CD14-positive monocyte (primary cell): ENCODE measurements at regions of chr12 and their contacts with region 1.

Region 1: DNA sequence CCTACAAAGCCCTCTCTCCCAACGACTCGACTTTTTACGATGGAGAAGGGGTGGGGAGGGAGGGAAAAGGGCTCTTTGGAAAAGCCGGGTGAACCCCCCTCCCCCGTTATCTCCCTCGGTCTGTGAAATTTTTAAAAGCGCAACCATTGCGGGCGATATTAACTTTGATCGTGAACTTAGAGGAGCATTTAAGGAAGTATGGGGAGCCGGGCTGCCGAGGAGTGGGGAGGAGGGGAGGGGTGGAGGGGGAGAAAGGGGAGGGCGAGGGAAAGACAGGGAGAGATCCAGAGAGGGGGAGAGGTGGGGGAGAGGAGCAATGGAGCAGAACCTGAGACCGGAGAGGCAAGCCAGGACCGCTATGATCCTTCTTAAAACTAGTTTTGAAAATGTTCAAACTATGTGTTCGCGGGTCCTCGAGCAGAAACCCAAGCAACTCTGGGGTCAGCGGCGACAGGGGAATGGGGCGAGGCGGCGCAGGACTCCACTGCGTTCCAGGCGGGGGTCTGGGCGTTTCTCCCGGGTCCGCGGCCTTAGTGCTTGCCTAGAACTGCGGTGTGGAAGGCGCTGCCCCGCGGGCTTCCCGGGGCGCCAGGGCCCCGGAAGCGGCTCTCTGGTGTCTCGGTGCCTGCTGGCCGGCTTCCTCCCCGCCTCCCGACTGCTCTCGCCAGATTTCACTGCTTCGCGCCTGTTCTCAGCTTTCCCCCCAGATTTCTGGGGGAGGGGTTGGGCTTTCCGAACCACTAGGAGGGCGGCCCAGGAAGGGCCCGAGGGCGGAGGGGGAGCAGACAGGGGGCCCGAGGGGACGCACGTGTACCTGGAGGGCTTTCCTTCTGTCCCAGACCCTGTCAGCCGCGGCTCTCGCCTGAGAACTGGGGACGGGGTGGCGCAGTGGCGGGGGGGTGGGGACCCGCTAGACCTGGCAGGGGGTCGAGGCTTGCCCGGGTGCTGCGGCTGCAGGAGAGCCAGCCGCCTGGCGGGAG is at the start of gene HOTAIR:
- DNase-seq: peak in 2 of 3 donors; percentile 23 to 39
- H3K4me3 ChIP-seq: peak within 1 kb of the TSS; percentile 32 to 71 (median 35)
- H3K4me3 Mint-ChIP-seq: peak within 1 kb of the TSS; percentile 67 to 86
- H3K27ac ChIP-seq: no peak within 1 kb of the TSS
- H3K27ac Mint-ChIP-seq: peak within 1 kb of the TSS in 2 of 7 donors; percentile 38 to 63
- H3K4me1 ChIP-seq: peaks cover 10 to 23% of the 10 kb centered on the region in 2 donors
- H3K4me1 Mint-ChIP-seq: peaks cover 27% of the 10 kb centered on the region
- H3K27me3 ChIP-seq: peaks cover 99 to 100% of the 10 kb centered on the region in 2 donors
- H3K27me3 Mint-ChIP-seq: peaks cover 96 to 100% (median 99%) of the 10 kb centered on the region in 3 donors
- CTCF ChIP-seq: no peak
- polyA plus RNA-seq, gene HOTAIR: not detected

Region 2: DNA sequence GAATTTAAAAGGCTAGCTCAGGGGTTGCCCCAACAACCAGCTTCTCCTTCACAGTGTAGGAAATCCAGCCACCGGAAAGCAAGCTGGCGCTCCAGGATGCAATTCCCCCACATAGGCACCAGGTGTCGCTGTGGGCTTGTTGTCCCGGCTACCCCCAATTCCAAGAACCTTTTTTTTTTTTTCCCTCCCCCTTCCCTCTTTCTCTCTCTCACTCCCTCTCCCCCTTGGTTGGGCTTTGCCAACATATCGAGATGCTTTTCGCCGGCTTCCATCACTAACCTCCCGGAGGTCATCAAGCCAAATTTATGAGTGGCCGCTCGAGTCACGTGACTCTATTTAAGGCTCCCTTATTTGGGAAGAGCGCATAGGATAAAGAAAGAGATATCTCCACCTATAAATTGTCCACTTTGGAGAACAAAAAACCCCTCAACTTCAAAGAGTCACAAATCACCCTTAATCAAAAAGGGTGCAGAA is 58.3 kb after region 1 on chr12 and contains the start of gene HOXC5:
- intact Hi-C with region 1: loop called in 1 of 2 experiments (anchors 10 kb)
- DNase-seq: peak; percentile 35 to 45 (median 37)
- H3K4me3 ChIP-seq: no peak within 1 kb of the TSS
- H3K4me3 Mint-ChIP-seq: peak within 1 kb of the TSS in 1 of 2 donors; percentile 84
- H3K27ac ChIP-seq: no peak within 1 kb of the TSS
- H3K27ac Mint-ChIP-seq: peak within 1 kb of the TSS in 1 of 7 donors; percentile 60
- H3K4me1 ChIP-seq: no peaks in the 10 kb centered on the region
- H3K4me1 Mint-ChIP-seq: peaks cover 16% of the 10 kb centered on the region
- H3K27me3 ChIP-seq: peaks cover 83 to 99% of the 10 kb centered on the region in 2 donors
- H3K27me3 Mint-ChIP-seq: peaks cover 91 to 98% (median 96%) of the 10 kb centered on the region in 3 donors
- CTCF ChIP-seq: peak; percentile 88
- polyA plus RNA-seq, gene HOXC5: not detected